Heart left ventricle (tissue), 16 donors: ENCODE measurements at regions of chr6 and their contacts with region 1.

Region 1: GRCh38 chr6:47804821-47805220 is 23.0 kb downstream of the OPN5 start:
- DNase-seq: no peak
- ATAC-seq: no peak
- H3K4me3 ChIP-seq: no peak overlapping the region
- H3K27ac ChIP-seq: no peak overlapping the region
- H3K4me1 ChIP-seq: no peaks in the 10 kb centered on the region
- H3K27me3 ChIP-seq: peaks cover 0 to 9% (median 0%) of the 10 kb centered on the region in 9 donors
- CTCF ChIP-seq: no peak
- POLR2A ChIP-seq: no peak

Region 2: DNA sequence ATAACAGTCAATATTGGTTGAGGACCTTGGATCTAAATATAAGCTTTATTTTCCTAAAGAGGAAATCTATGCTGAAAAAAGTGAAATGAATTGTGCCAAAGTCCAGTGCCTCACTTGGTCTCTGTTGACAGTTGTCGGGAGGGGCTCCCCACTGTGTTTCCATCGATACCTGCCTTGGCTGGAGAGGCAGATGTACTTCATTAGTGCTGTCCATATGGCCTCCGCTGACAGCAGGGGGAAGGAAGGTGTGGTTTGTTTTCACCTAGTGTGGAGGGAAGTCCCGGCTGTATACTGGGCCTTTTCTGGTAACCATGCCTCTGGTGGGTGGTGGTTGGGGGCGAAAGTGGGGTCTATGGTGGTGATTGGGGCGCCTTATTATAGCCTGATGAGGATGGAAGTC is 284.5 kb before region 1 on chr6:
- intact Hi-C with region 1: no loop called
- DNase-seq: no peak
- ATAC-seq: no peak
- H3K4me3 ChIP-seq: no peak overlapping the region
- H3K27ac ChIP-seq: no peak overlapping the region
- H3K4me1 ChIP-seq: peaks cover 0 to 17% (median 4%) of the 10 kb centered on the region in 12 donors
- H3K27me3 ChIP-seq: no peaks in the 10 kb centered on the region
- CTCF ChIP-seq: no peak
- POLR2A ChIP-seq: no peak

Region 3: DNA sequence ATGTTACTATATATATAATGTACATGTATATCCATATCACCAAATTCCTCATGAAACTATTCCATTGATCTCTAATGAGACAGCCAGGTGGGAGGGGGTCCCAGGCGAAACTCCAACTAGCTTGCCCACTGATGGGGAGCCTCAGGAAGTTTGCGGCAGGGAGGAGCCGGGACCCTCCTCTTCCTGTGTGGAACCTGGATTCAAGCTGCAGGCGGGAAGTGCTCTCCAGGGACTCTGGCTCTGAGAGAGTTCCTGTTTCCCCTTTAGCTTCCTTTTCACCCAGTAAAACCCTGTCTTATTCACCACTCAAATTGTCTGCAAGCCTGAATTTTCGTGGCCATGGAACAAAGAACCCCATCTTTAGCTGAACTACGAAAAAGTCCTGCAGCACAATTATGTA is 129.2 kb after region 1 on chr6:
- intact Hi-C with region 1: loop called in 1 of 10 experiments (anchors 10 kb)
- DNase-seq: peak in 4 of 5 donors; percentile 18 to 43 (median 32)
- ATAC-seq: peak in 1 of 4 donors; percentile 82
- H3K4me3 ChIP-seq: no peak overlapping the region
- H3K27ac ChIP-seq: peak overlapping the region in 3 of 12 donors; percentile 2 to 26 (median 17)
- H3K4me1 ChIP-seq: peaks cover 0 to 27% (median 0%) of the 10 kb centered on the region in 12 donors
- H3K27me3 ChIP-seq: no peaks in the 10 kb centered on the region
- CTCF ChIP-seq: no peak
- POLR2A ChIP-seq: no peak